ENCODE measurements at regions of chr11 and their contacts with region 1.

Region 1: GRCh38 chr11:33808228-33808828 is 34.0 kb upstream of the FBXO3 start:
- DNase-seq: peak; percentile 63
- H3K4me3 ChIP-seq: no peak overlapping the region
- H3K27ac ChIP-seq: no peak overlapping the region
- H3K27me3 ChIP-seq: peaks cover 3% of the 10 kb centered on the region
- CTCF ChIP-seq: peak; percentile 94

Region 2: GRCh38 chr11:33778675-33779074 is 29.7 kb before region 1 on chr11:
- CTCF ChIA-PET with region 1: interaction called, 30 read pairs
- POLR2A ChIA-PET with region 1: no interaction called
- DNase-seq: peak; percentile 59
- H3K4me3 ChIP-seq: no peak overlapping the region
- H3K27ac ChIP-seq: no peak overlapping the region
- H3K27me3 ChIP-seq: peaks cover 3% of the 10 kb centered on the region
- CTCF ChIP-seq: no peak

Region 3: DNA sequence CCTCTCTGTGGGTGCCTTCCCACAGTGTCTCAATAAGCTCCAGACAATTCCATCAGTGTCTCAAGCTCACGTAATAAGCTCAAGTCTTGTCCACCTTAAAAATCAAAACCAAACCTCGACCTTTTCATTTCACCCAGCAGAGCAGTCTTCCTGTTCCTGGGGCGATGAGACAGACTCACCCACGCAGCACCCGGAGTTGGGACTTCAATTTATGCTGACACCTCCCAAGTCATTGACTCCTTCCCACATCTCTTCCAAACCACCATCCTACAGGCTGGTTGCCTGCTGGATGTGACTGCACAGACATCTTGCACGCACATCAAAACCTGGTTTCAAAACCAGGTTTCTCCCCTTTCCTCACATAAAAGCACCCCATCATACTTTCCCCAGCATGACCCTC is 10.9 kb after region 1 on chr11:
- CTCF ChIA-PET with region 1: interaction called, 206 read pairs
- POLR2A ChIA-PET with region 1: no interaction called
- DNase-seq: no peak
- H3K4me3 ChIP-seq: no peak overlapping the region
- H3K27ac ChIP-seq: no peak overlapping the region
- H3K27me3 ChIP-seq: peaks cover 41% of the 10 kb centered on the region
- CTCF ChIP-seq: no peak

Region 4: DNA sequence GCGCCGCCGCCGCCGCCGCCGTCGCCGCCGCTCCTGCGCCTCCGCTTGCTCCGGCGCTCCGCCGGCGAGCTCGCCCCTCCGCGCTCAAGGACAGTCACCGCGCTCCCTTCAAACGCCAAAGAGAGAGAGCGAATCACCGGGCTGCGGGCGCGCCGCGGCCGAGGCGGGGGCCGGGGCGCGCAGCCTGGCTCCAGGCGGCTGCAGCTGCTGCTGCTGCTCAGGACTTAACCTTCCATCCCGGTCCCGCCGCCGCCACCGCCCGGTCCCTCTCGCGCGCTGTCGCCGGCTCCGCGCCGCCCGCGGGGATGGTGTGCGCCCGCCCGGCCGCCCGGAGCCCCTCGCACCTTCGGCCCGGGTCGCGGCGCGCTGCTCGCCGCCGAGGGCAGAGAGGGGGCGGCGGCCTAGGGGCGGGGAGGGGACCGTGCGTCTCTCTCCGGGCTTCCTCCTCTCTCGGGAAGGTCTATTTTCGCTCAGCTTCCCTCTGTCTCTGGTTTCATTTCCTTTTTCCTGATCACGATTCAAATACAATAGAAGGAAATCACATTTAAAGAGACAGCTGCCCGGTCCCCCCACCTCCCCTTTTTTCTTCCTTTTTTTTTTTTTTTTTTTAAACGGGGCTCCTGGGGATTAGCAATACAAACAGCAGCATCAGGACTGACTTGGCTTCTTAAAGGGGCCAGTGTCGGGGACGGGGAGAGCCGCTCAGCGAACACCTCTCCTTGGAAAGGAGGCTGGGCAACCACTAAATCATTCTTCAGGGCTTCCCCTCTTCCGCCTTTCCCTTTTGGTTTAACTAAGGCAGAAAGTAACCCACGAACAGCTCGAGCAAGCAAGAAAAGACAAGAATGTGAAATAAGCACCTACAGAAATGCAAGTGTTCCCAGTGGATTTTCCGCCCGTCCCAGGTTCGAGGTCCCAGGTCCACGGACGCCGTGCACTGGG is 61.4 kb after region 1 on chr11:
- CTCF ChIA-PET with region 1: interaction called, 11 read pairs
- POLR2A ChIA-PET with region 1: no interaction called
- DNase-seq: no peak
- H3K4me3 ChIP-seq: peak overlapping the region; percentile 55
- H3K27ac ChIP-seq: no peak overlapping the region
- H3K27me3 ChIP-seq: peaks cover 67% of the 10 kb centered on the region
- CTCF ChIP-seq: no peak

Region 5: GRCh38 chr11:33987975-33988580 is 179.8 kb after region 1 on chr11:
- CTCF ChIA-PET with region 1: interaction called, 30 read pairs
- POLR2A ChIA-PET with region 1: no interaction called
- DNase-seq: peak; percentile 49
- H3K4me3 ChIP-seq: no peak overlapping the region
- H3K27ac ChIP-seq: no peak overlapping the region
- H3K27me3 ChIP-seq: no peaks in the 10 kb centered on the region
- CTCF ChIP-seq: peak; percentile 79

Measured in AG04450 (cell line).